CD4-positive, alpha-beta memory T cell (primary cell): ENCODE measurements at regions of chr4 and their contacts with region 1.

Region 1: DNA sequence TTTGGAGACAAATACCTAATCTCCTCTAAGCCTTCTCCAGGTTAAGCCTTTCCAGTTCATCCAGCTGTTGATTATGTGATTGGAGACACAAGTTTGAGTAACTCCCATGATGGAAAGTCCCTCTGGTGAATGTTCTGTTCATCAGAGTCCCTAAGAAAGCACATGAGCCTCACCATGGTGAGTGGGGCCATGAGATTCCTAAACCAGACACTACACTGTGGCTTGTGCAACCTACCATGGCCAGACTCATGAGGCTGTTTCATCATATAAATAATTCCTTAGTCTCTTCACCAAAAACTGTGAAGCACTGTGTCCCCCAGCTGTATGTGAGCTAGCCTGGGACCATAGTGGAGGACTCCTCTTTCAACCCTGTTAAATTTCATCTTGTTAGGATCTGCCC is 14.4 kb downstream of the PKD2 start:
- DNase-seq: no peak
- H3K4me3 ChIP-seq: no peak overlapping the region
- H3K4me3 Mint-ChIP-seq: no peak overlapping the region
- H3K27ac ChIP-seq: no peak overlapping the region
- H3K27ac Mint-ChIP-seq: no peak overlapping the region
- H3K4me1 ChIP-seq: no peaks in the 10 kb centered on the region
- H3K4me1 Mint-ChIP-seq: peaks cover 0 to 3% (median 1%) of the 10 kb centered on the region in 4 donors
- H3K27me3 ChIP-seq: no peaks in the 10 kb centered on the region
- H3K27me3 Mint-ChIP-seq: no peaks in the 10 kb centered on the region

Region 2: DNA sequence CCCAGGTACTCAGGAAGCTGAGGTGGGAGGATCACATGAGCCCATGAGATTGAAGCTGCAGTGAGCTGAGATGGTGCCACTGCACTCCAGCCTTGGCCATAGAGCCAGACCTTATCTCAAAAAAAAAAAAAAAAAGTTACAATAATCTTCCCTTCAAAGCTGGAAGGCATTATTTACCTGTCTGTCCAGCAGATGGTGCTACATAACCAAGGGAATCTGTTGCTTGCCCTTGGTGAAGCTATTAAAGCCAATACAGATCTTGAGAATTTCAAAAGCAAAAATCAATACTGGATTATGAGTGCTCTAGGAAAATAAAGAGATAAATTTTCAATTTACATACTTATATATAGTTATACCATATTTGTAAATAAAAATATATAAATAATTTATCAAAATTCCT is 11.5 kb after region 1 on chr4:
- CTCF ChIA-PET with region 1: interaction called, 24 read pairs
- POLR2A ChIA-PET with region 1: no interaction called
- intact Hi-C with region 1: no loop called
- DNase-seq: peak; percentile 32 to 55 (median 45)
- H3K4me3 ChIP-seq: no peak overlapping the region
- H3K4me3 Mint-ChIP-seq: no peak overlapping the region
- H3K27ac ChIP-seq: no peak overlapping the region
- H3K27ac Mint-ChIP-seq: no peak overlapping the region
- H3K4me1 ChIP-seq: no peaks in the 10 kb centered on the region
- H3K4me1 Mint-ChIP-seq: no peaks in the 10 kb centered on the region
- H3K27me3 ChIP-seq: no peaks in the 10 kb centered on the region
- H3K27me3 Mint-ChIP-seq: no peaks in the 10 kb centered on the region

Region 3: GRCh38 chr4:88398381-88398780 is 376.6 kb after region 1 on chr4:
- CTCF ChIA-PET with region 1: no interaction called
- POLR2A ChIA-PET with region 1: no interaction called
- intact Hi-C with region 1: no loop called
- DNase-seq: no peak
- H3K4me3 ChIP-seq: no peak overlapping the region
- H3K4me3 Mint-ChIP-seq: no peak overlapping the region
- H3K27ac ChIP-seq: no peak overlapping the region
- H3K27ac Mint-ChIP-seq: no peak overlapping the region
- H3K4me1 ChIP-seq: no peaks in the 10 kb centered on the region
- H3K4me1 Mint-ChIP-seq: no peaks in the 10 kb centered on the region
- H3K27me3 ChIP-seq: no peaks in the 10 kb centered on the region
- H3K27me3 Mint-ChIP-seq: no peaks in the 10 kb centered on the region